ENCODE measurements at regions of chrX and their contacts with region 1.

Region 1: GRCh38 chrX:116342903-116343302 is 93.5 kb upstream of the SLC6A14 start:
- DNase-seq: no peak
- ATAC-seq: no peak
- H3K4me3 ChIP-seq: no peak overlapping the region
- H3K4me3 Mint-ChIP-seq: no peak overlapping the region
- H3K27ac ChIP-seq: no peak overlapping the region
- H3K27ac Mint-ChIP-seq: no peak overlapping the region
- H3K4me1 ChIP-seq: no peaks in the 10 kb centered on the region
- H3K4me1 Mint-ChIP-seq: no peaks in the 10 kb centered on the region
- H3K27me3 ChIP-seq: no peaks in the 10 kb centered on the region
- H3K27me3 Mint-ChIP-seq: no peaks in the 10 kb centered on the region

Region 2: GRCh38 chrX:115226929-115227328 is 1116.0 kb before region 1 on chrX:
- CTCF ChIA-PET with region 1: no interaction called
- POLR2A ChIA-PET with region 1: interaction called, 10 read pairs
- intact Hi-C with region 1: no loop called
- DNase-seq: no peak
- ATAC-seq: no peak
- H3K4me3 ChIP-seq: no peak overlapping the region
- H3K4me3 Mint-ChIP-seq: no peak overlapping the region
- H3K27ac ChIP-seq: no peak overlapping the region
- H3K27ac Mint-ChIP-seq: no peak overlapping the region
- H3K4me1 ChIP-seq: no peaks in the 10 kb centered on the region
- H3K4me1 Mint-ChIP-seq: no peaks in the 10 kb centered on the region
- H3K27me3 ChIP-seq: no peaks in the 10 kb centered on the region
- H3K27me3 Mint-ChIP-seq: peaks cover 3 to 15% (median 3%) of the 10 kb centered on the region in 5 donors

Region 3: GRCh38 chrX:116267511-116268040 is 75.3 kb before region 1 on chrX:
- CTCF ChIA-PET with region 1: no interaction called
- POLR2A ChIA-PET with region 1: no interaction called
- intact Hi-C with region 1: no loop called
- DNase-seq: no peak
- ATAC-seq: no peak
- H3K4me3 ChIP-seq: no peak overlapping the region
- H3K4me3 Mint-ChIP-seq: no peak overlapping the region
- H3K27ac ChIP-seq: no peak overlapping the region
- H3K27ac Mint-ChIP-seq: no peak overlapping the region
- H3K4me1 ChIP-seq: no peaks in the 10 kb centered on the region
- H3K4me1 Mint-ChIP-seq: no peaks in the 10 kb centered on the region
- H3K27me3 ChIP-seq: no peaks in the 10 kb centered on the region
- H3K27me3 Mint-ChIP-seq: no peaks in the 10 kb centered on the region

Region 4: GRCh38 chrX:116317409-116317808 is 25.5 kb before region 1 on chrX:
- CTCF ChIA-PET with region 1: no interaction called
- POLR2A ChIA-PET with region 1: no interaction called
- intact Hi-C with region 1: no loop called
- DNase-seq: no peak
- ATAC-seq: no peak
- H3K4me3 ChIP-seq: no peak overlapping the region
- H3K4me3 Mint-ChIP-seq: no peak overlapping the region
- H3K27ac ChIP-seq: no peak overlapping the region
- H3K27ac Mint-ChIP-seq: no peak overlapping the region
- H3K4me1 ChIP-seq: no peaks in the 10 kb centered on the region
- H3K4me1 Mint-ChIP-seq: no peaks in the 10 kb centered on the region
- H3K27me3 ChIP-seq: no peaks in the 10 kb centered on the region
- H3K27me3 Mint-ChIP-seq: no peaks in the 10 kb centered on the region